ENCODE measurements at regions of chr7 and their contacts with region 1.

Region 1: DNA sequence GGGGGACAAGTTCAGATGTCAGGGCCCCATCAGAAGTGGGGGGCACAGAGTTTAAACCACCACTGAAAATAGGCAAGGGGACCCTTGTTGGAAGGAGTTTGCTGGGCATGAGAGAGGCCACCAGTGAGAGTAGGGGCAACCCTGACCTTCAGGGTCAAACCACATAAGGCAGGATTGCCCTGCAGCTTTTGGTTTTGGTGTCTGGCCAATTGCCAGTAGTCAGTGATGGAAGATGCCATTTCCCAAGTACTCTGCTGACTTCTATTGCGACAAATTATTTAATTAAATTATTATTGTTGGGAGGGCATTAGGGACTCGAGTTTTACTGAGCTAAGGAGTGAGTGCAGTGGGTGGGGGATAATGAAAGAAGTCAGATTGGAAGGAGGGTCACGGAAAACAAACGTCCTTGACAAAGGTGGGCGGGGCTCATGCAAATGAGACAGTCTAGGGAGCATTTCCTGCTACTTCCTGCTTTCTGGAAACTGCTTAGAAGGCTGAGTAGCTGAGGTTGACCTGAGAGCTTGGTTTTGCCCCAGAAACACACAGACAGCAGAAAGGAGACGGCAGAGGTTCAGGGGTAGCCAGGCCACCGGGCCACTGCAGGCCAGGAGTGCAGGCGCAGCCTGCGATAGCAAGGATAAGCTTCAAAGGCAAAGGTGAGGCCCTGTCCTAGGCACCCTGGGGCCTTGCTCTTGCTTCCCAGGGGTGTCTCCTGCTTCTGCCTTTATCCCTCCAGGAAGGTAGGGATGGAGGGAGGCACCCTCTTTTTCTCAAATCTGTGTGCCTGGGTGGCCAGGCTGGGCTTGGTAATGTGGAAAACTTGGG is 74.1 kb upstream of the ANLN start:
- DNase-seq: no peak
- ATAC-seq: peak; percentile 64

Region 2: GRCh38 chr7:35985126-35985754 is 330.3 kb before region 1 on chr7:
- intact Hi-C with region 1: loop called in 1 of 2 experiments (anchors 5 kb)
- DNase-seq: peak; percentile 67 to 84
- ATAC-seq: peak; percentile 99